H1 (cell line): ENCODE measurements at regions of chr16 and their contacts with region 1.

Region 1: GRCh38 chr16:24253192-24253591 is 2.9 kb upstream of the CACNG3 start:
- DNase-seq: peak; percentile 33 to 54
- H3K4me3 ChIP-seq: no peak overlapping the region
- H3K27ac ChIP-seq: no peak overlapping the region
- H3K4me1 ChIP-seq: peaks cover 0 to 4% (median under 1%) of the 10 kb centered on the region in 4 experiments; a peak in 3 of 7 replicates
- H3K27me3 ChIP-seq: peaks cover 5 to 25% (median 15%) of the 10 kb centered on the region in 4 experiments
- CTCF ChIP-seq: peak; percentile 0 to 79 (median 79)
- EP300 ChIP-seq: no peak
- POLR2A ChIP-seq: no peak
- RAD21 ChIP-seq: peak; percentile 79 to 90

Region 2: DNA sequence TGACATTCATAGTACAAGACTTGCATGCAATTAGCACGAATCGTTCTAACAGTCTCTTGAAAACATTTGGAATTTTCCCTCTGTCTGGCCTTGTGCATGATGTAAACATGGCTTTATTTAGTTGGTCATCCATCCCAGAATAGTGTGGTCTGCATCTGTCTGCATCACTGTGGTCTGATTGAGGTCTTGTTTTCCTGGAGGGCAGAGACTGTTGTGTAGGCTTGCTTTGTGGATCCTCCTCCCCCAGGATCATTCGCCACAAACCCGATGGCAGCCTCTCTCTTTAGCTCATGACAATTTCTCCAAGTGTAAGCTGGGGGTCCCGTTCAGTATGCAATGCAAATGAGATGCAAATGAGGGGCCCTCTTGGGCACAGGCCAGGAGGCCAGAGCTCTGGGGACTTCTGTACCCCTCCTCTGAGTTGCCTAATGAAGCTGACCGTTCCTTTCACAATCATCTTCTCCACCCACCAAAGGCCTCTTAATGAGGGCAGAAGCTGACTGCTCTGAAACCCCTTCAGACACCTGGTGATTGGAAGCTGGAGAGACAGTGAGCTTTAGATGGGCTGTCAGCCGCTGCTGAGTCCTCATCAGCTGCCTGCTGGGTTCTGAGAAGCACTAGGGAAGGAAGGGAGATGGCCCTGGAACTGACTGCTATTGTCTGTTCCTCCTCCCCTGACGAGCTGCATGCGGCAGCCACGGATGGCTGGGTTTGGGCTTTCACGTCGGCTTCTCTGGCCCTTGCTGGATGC is 198.3 kb before region 1 on chr16:
- CTCF ChIA-PET with region 1: interaction called, 13 read pairs
- POLR2A ChIA-PET with region 1: no interaction called
- DNase-seq: peak in 1 of 2 experiments; percentile 56
- H3K4me3 ChIP-seq: peak overlapping the region in 1 of 4 experiments; percentile 16; a peak in 2 of 8 replicates
- H3K27ac ChIP-seq: peak overlapping the region; percentile 3; the same call in 1 of the 2 replicates
- H3K4me1 ChIP-seq: peaks cover 5 to 30% (median 12%) of the 10 kb centered on the region in 4 experiments
- H3K27me3 ChIP-seq: no peaks in the 10 kb centered on the region
- CTCF ChIP-seq: no peak
- EP300 ChIP-seq: no peak
- POLR2A ChIP-seq: no peak
- RAD21 ChIP-seq: peak in 1 of 2 experiments; percentile 9; a peak in 1 of 4 replicates

Region 3: DNA sequence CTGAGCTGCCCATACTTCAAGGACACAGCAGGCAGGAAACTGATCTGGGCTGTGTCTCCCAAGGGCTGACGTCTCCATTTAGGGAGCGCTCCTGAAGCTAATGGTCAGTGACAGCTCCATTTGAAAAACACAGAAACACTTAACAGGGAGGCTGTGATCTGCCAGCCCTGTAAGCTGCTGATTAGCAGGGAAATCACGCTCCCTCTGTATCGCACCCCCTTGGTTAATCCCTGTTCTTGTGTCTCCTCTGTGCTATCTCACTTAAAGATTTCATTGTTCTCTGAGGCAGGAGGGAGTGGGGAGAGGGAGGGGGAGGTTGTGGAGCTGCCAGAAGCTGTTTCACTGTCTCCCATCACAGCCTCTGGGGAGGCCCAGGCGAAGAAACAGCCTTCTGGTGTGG is 44.5 kb before region 1 on chr16:
- CTCF ChIA-PET with region 1: interaction called, 10 read pairs
- POLR2A ChIA-PET with region 1: no interaction called
- DNase-seq: no peak
- H3K4me3 ChIP-seq: no peak overlapping the region
- H3K27ac ChIP-seq: no peak overlapping the region
- H3K4me1 ChIP-seq: peaks cover 2 to 10% (median 7%) of the 10 kb centered on the region in 4 experiments; a peak in 6 of 7 replicates
- H3K27me3 ChIP-seq: no peaks in the 10 kb centered on the region
- CTCF ChIP-seq: no peak
- EP300 ChIP-seq: no peak
- POLR2A ChIP-seq: no peak
- RAD21 ChIP-seq: no peak

Region 4: GRCh38 chr16:24221219-24221618 is 32.0 kb before region 1 on chr16:
- CTCF ChIA-PET with region 1: interaction called, 22 read pairs
- POLR2A ChIA-PET with region 1: no interaction called
- DNase-seq: no peak
- H3K4me3 ChIP-seq: no peak overlapping the region
- H3K27ac ChIP-seq: no peak overlapping the region
- H3K4me1 ChIP-seq: no peaks in the 10 kb centered on the region
- H3K27me3 ChIP-seq: no peaks in the 10 kb centered on the region
- CTCF ChIP-seq: no peak
- EP300 ChIP-seq: no peak
- POLR2A ChIP-seq: no peak
- RAD21 ChIP-seq: no peak

Region 5: GRCh38 chr16:24273473-24274182 is 20.4 kb after region 1 on chr16:
- CTCF ChIA-PET with region 1: interaction called, 21 read pairs
- POLR2A ChIA-PET with region 1: interaction called, 4 read pairs
- DNase-seq: no peak
- H3K4me3 ChIP-seq: no peak overlapping the region
- H3K27ac ChIP-seq: no peak overlapping the region
- H3K4me1 ChIP-seq: no peaks in the 10 kb centered on the region; a peak in 2 of 7 replicates
- H3K27me3 ChIP-seq: no peaks in the 10 kb centered on the region
- CTCF ChIP-seq: no peak
- EP300 ChIP-seq: no peak
- POLR2A ChIP-seq: no peak
- RAD21 ChIP-seq: no peak

Region 6: GRCh38 chr16:24504472-24505345 is 251.5 kb after region 1 on chr16:
- CTCF ChIA-PET with region 1: interaction called, 53 read pairs
- POLR2A ChIA-PET with region 1: no interaction called
- DNase-seq: peak; percentile 38 to 72
- H3K4me3 ChIP-seq: no peak overlapping the region
- H3K27ac ChIP-seq: no peak overlapping the region
- H3K4me1 ChIP-seq: no peaks in the 10 kb centered on the region
- H3K27me3 ChIP-seq: no peaks in the 10 kb centered on the region; a peak in 1 of 7 replicates
- CTCF ChIP-seq: peak; percentile 58 to 92 (median 84)
- EP300 ChIP-seq: no peak
- POLR2A ChIP-seq: no peak
- RAD21 ChIP-seq: peak; percentile 95 to 98

Region 7: DNA sequence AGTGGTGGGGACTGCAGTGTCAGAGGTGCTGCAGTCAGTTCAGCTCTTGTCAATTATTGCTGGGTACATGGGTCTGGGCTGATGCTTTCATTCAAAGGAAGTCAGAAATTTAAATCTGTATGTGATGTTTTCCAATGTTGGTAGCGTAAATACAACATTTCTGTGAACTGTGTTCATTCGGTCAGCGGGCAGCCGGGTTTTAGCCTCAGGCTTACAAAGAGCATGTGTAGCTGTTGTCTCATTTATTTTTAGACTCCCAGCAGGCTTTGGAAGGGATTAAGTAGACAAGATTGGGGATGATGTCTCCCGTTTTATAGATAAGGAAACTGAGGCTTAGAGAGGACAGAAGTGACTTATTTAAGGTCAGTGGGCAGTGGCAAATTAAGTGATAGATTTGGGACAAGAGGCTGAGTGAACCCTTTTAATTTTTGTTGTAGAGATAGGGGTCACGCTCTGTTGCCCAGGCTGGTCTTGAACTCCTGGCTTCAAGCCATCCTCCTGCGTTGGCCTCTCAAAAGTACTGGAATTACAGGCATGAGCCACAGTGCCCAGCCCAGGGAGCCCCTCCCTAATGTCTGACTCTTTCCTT is 971.6 kb after region 1 on chr16:
- CTCF ChIA-PET with region 1: no interaction called
- POLR2A ChIA-PET with region 1: no interaction called
- DNase-seq: no peak
- H3K4me3 ChIP-seq: no peak overlapping the region
- H3K27ac ChIP-seq: no peak overlapping the region
- H3K4me1 ChIP-seq: peaks cover 0 to 3% (median 2%) of the 10 kb centered on the region in 4 experiments; a peak in 3 of 7 replicates
- H3K27me3 ChIP-seq: no peaks in the 10 kb centered on the region
- CTCF ChIP-seq: no peak
- EP300 ChIP-seq: no peak
- POLR2A ChIP-seq: no peak
- RAD21 ChIP-seq: no peak